ENCODE measurements at regions of chr5 and their contacts with region 1.

Region 1: DNA sequence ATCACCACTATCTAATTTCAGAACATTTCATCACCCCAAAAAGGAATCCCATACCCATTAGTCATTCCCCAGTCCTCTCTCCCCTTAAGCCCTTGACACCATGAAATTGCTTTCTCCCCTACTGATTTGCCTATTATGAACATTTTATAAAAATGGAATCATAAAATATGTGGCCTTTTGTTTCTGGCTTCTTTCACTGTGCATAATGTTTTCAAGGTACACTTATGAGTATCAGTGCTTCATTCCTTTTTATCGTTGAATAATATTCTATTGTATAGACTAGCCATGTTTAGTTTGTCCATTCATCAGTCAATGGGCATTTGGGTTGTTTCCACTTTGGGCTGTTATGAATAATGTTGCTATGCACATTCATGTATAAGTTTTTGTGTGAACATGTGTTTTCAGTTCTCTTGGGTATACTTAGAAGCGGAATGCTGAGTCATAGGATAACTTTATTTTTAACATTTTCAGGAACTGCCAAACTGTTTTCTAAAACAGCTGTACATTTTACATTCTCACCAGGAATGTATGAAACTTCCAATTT is 40.4 kb upstream of the FGF1 start:
- DNase-seq: no peak
- H3K4me3 ChIP-seq: no peak overlapping the region
- H3K27ac ChIP-seq: peak overlapping the region; percentile 94
- H3K4me1 ChIP-seq: peaks cover 30% of the 10 kb centered on the region
- H3K27me3 ChIP-seq: no peaks in the 10 kb centered on the region
- CTCF ChIP-seq: no peak

Region 2: DNA sequence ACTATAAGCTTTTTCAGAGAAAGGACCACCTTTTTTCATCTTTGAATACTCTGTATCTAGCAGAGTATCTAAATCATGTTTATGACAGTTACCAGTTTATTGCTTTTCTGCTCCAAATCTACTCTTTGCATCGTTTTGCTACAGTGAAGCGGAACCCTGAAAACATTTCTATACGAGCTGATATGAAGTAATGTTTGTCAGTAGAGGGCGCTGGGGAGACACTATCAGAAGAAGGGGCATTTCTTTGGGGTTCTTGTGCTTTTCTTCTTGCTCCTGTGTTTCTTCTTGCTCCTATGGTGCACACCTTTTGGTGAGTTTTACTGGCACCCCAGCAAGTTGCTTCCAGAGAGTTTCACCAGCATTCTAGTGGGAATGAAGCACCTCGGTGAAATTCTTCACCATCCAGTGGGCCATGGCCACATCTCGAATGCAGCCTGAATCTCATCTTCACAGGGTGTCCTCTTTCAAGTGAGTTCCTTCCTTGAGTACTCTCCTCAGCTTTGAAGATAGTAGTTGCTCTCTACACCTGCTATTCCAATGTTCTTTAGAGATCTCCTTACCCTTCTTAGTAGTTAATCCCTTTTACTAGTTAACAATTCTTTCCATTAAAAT is 138.8 kb before region 1 on chr5:
- dilution Hi-C with region 1: no loop called
- DNase-seq: no peak
- H3K4me3 ChIP-seq: no peak overlapping the region
- H3K27ac ChIP-seq: no peak overlapping the region
- H3K4me1 ChIP-seq: no peaks in the 10 kb centered on the region
- H3K27me3 ChIP-seq: no peaks in the 10 kb centered on the region
- CTCF ChIP-seq: peak; percentile 55 to 71 (median 59)

Region 3: DNA sequence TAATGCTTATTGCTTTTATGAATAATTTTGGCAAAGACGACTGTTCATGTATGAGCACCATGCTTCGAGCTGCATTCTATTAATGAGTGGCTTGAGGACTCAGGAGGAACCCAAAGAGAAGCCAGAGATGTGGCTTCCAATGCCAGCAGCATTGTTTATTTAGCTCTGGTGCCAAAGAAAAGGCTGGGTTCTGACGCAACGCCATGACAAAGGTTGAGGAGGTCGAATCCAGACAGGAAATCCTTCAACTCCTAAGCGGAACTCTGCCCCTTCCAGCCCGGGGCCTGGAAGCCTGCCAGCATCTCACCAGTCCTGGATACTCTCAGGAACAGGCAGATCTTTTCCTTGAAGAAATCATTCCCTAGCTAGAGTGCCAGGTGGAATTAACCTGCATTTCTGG is 148.3 kb after region 1 on chr5:
- dilution Hi-C with region 1: loop called (anchors 10 kb)
- DNase-seq: no peak
- H3K4me3 ChIP-seq: no peak overlapping the region
- H3K27ac ChIP-seq: no peak overlapping the region
- H3K4me1 ChIP-seq: peaks cover 32% of the 10 kb centered on the region
- H3K27me3 ChIP-seq: no peaks in the 10 kb centered on the region
- CTCF ChIP-seq: no peak